Sciatic nerve (tissue), 2 donors: ENCODE measurements at regions of chr10 and their contacts with region 1.

Region 1: DNA sequence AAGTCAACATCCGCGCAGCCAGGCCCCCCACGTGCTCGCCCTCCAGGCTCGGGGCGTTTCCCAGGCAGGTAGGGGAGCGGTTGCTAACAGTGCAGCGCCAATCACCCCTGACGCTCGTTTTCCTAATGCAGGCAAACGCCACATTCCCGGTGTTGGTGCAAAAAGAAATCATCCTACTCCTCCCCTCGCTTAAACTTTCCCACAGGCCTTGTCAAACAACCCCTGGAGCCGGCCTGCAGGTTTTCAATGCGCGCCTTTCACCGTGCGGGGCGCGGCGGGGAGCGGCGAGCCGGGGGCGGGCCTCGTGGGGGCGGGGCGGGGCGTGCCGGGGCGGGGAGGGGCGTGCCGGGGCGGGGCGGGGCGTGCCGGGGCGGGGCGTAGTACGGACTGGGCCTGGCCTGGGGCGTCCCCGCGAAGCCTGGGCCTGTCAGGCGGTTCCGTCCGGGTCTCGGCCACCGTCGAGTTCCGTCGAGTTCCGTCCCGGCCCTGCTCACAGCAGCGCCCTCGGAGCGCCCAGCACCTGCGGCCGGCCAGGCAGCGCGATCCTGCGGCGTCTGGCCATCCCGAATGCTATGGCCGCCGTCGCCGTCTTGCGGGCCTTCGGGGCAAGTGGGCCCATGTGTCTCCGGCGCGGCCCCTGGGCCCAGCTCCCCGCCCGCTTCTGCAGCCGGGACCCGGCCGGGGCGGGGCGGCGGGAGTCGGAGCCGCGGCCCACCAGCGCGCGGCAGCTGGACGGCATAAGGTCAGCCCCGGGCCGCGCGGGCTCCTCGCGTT is at the start of gene ECHDC3:
- DNase-seq: peak; percentile 82
- ATAC-seq: peak; percentile 87
- total RNA-seq, gene ECHDC3: 8.6 TPM

Region 2: DNA sequence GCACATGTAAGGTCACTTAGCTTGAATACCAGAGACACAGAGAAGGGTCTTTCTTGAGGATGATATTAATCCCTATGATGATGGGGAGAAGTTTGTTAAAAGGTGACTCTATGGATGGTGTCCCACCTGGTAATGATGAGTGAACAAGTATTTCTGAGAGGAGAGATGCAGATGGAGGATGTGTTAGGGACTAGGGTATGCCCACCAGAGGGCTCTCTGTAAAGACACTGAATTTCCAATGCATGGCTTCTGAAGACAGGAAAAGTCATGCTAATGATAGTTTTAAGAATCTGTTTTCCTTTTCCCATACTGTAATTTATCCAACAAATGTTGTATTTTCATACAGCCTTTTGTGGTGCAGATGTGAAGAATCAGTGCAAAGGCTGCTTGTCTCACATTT is 1975.4 kb before region 1 on chr10:
- intact Hi-C with region 1: loop called (anchors 5 kb)
- DNase-seq: no peak
- ATAC-seq: no peak

Region 3: DNA sequence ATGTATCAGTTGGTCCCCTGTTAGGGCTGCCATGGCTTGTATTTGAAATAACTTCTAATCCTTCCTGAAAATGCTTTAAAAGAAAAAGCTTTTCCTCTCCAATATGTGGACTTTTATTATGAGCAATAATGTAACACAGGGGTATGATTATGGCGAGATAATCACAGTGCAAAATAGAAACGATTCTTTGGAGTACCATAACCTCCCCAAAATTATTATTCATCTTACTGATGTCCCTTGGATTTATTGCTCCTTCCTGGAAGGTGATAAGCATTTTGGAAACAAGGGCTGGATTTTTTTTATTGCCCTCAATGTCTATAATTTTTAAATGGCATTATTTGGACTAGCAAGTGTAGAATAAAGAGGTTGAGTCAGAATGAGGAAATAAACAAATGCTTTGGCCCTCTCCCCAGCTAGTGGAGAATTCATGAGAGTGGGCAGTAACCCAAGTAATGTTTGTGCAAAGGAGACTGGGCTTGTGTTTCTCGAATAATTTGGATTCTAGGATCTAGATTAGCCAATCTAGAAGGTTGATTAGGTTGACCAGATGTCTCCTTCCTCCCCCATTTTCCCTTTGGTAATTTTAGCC is 1128.4 kb before region 1 on chr10:
- intact Hi-C with region 1: no loop called
- DNase-seq: no peak
- ATAC-seq: no peak

Region 4: DNA sequence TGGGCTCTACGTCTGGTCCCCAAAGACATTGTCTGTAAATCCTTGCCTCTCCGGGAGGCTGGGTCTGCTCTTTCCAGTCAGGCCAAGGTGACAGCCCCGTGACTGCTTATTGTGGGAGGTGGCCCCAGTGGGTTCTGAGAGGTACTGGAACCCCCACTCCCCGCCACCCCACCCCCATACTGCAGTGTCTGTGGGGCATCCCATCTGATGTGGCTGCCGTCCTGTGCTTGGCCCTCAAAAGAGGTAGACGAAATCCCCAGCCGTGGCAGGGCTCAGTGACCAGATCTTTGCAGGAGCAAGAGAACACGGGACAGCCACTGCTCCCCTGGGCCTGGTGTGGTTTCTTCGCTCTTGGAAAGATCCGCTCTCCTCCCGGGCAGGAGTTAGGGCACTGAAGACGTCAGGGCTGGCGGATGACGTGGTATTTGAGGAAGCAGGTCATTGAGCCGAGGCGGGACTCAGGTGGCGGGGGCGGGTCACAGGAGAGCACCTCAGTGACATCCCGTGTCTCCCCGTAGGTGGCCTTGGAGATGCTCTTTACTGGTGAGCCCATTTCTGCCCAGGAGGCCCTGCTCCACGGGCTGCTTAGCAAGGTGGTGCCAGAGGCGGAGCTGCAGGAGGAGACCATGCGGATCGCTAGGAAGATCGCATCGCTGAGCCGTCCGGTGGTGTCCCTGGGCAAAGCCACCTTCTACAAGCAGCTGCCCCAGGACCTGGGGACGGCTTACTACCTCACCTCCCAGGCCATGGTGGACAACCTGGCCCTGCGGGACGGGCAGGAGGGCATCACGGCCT is 20.7 kb after region 1 on chr10:
- intact Hi-C with region 1: no loop called
- DNase-seq: no peak
- ATAC-seq: no peak

Region 5: DNA sequence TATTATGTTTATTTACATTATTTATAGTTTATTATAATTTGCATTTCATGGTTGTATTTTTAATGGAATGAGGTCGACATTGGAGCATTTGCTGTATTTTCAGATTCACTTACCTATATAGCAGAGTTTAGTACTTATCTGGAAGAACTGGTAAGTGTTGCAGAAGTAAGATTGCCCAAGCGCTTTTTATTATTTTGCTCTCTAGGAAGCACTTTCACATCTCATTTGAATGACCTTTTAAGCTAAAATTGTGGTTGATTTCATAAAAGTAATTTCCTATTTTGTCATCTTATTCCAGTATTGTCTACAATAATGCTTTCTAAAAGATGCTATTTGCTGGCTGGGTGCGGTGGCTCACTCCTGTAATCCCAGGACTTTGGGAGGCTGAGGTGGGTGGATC is 415.9 kb after region 1 on chr10:
- intact Hi-C with region 1: no loop called
- DNase-seq: no peak
- ATAC-seq: no peak

Region 6: GRCh38 chr10:13542533-13542932 is 1800.3 kb after region 1 on chr10:
- intact Hi-C with region 1: no loop called
- DNase-seq: no peak
- ATAC-seq: no peak